Endothelial cell of umbilical vein (primary cell): ENCODE measurements at regions of chr22 and their contacts with region 1.

Region 1: DNA sequence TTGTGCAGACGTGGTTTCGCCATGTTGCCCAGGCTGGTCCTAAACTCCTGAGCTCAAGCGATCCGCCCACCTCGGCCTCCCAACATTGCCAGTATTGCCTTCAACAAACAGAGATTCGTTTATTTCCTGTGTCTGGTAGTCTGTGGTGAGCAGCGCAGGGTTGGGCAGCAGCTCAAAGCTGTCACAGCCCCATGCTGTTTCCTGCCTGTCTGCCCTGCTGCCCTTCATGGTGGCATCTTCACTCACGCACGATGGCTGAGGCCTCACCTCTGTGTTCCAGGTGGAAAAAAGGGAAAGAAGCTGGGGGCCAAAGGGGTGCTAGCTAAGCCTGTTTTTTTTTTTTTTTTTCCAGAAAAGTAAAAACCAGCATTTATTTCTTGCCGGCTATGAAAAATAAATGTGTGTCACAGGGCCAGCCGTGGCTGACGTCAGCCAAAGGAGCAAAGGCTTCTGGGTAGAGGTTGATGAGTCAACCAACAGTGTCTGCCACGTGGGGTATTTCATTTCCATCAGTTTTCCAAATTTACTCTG is 28.8 kb downstream of the TBC1D22A start:
- DNase-seq: peak; percentile 42
- H3K4me3 ChIP-seq: no peak overlapping the region
- H3K27ac ChIP-seq: peak overlapping the region; percentile 76
- H3K4me1 ChIP-seq: peaks cover 25% of the 10 kb centered on the region
- H3K27me3 ChIP-seq: no peaks in the 10 kb centered on the region
- CTCF ChIP-seq: no peak
- POLR2A ChIP-seq: no peak

Region 2: DNA sequence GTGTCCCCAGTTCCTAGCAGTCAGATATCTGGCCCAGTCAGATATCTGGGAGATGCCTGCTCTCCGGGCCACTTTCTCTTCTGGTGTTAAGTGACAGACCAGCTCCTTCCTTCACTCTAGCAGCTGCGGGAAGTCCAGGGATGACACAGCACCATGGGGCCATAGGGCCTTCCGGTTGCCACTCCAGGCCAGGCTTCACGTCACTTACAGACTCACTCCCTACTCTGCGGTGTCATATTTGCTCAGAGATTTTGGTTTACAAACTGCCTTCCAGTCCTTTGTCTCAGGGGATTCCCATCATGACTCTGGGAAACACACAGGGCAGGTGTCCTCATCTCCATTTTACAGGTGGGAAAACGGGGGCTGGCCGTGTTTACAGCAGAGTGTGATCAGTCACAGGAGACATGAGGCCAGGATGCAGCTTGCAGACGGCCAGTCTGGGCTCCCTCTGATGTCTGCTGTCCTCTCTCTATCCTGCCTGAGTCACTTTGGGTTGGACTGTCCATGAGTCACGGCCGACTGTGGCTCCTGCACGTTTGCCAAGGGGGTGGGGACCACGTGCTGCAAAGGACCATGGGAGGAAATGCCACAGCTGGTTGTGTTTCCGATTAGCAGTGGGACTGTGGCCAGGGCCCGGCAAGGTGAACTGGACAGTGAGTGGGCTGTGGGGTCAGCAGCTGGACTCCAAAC is 37.0 kb before region 1 on chr22:
- CTCF ChIA-PET with region 1: interaction called, 12 read pairs
- POLR2A ChIA-PET with region 1: no interaction called
- dilution Hi-C with region 1: no loop called
- intact Hi-C with region 1: loop called (anchors 1 kb)
- DNase-seq: peak; percentile 99
- H3K4me3 ChIP-seq: no peak overlapping the region
- H3K27ac ChIP-seq: peak overlapping the region; percentile 95
- H3K4me1 ChIP-seq: peaks cover 52% of the 10 kb centered on the region
- H3K27me3 ChIP-seq: no peaks in the 10 kb centered on the region
- CTCF ChIP-seq: no peak
- POLR2A ChIP-seq: no peak

Region 3: DNA sequence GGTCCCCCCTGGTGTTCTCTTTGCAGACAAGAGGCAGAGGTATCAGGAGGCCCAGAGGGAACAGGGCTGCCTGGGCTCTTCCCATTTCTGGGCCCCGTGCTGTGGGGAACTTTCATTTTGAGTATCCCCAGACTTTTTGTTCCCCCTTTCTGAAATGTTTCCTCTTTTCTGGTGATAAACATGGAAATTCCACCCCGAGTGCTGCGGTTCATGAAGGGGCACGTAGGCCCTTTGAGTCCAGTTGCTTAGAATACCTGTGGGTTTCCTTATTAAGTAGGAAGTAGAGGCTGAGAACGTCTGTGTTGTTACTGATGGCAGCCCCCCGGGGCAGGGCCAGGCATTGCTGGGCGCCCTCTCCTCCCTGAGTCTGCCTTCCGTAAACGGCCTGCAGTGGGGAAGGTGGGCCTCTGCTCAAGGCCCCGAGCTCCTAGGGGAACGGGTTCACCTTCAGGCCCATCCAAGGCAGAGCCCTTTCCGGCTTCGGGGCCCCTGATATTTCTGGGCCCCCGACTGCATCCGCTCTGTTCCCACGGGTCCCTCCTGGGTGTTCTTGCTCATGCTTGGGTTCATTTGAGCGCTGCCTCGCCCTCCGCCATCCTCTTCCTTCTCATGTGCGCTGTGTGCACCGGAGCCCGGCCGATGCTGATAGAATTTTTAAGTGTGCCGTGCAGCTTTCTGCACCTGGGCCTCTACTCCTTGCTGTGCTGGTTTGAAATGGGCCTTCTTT is 16.9 kb before region 1 on chr22:
- CTCF ChIA-PET with region 1: no interaction called
- POLR2A ChIA-PET with region 1: no interaction called
- dilution Hi-C with region 1: no loop called
- intact Hi-C with region 1: no loop called
- DNase-seq: no peak
- H3K4me3 ChIP-seq: no peak overlapping the region
- H3K27ac ChIP-seq: no peak overlapping the region
- H3K4me1 ChIP-seq: peaks cover 18% of the 10 kb centered on the region
- H3K27me3 ChIP-seq: no peaks in the 10 kb centered on the region
- CTCF ChIP-seq: no peak
- POLR2A ChIP-seq: no peak

Region 4: GRCh38 chr22:46829941-46830715 is 38.9 kb after region 1 on chr22:
- CTCF ChIA-PET with region 1: no interaction called
- POLR2A ChIA-PET with region 1: no interaction called
- dilution Hi-C with region 1: no loop called
- intact Hi-C with region 1: no loop called
- DNase-seq: peak; percentile 55
- H3K4me3 ChIP-seq: no peak overlapping the region
- H3K27ac ChIP-seq: peak overlapping the region; percentile 44
- H3K4me1 ChIP-seq: peaks cover 33% of the 10 kb centered on the region
- H3K27me3 ChIP-seq: no peaks in the 10 kb centered on the region
- CTCF ChIP-seq: no peak
- POLR2A ChIP-seq: no peak